ENCODE measurements at regions of chr3 and their contacts with region 1.

Region 1: GRCh38 chr3:25033407-25034029 is 394.5 kb upstream of the RARB start:
- DNase-seq: peak in 1 of 2 donors; percentile 29
- H3K4me3 ChIP-seq: no peak overlapping the region
- H3K27ac ChIP-seq: no peak overlapping the region
- H3K4me1 ChIP-seq: peaks cover 0 to 35% (median 21%) of the 10 kb centered on the region in 4 donors
- H3K27me3 ChIP-seq: no peaks in the 10 kb centered on the region
- CTCF ChIP-seq: peak in 1 of 2 experiments; percentile 32

Region 2: GRCh38 chr3:25573386-25574171 is 540.1 kb after region 1 on chr3:
- intact Hi-C with region 1: loop called (anchors 10 kb)
- DNase-seq: no peak
- H3K4me3 ChIP-seq: no peak overlapping the region
- H3K27ac ChIP-seq: peak overlapping the region; percentile 67 to 71
- H3K4me1 ChIP-seq: peaks cover 0 to 18% (median 7%) of the 10 kb centered on the region in 4 donors
- H3K27me3 ChIP-seq: no peaks in the 10 kb centered on the region
- CTCF ChIP-seq: no peak